ENCODE measurements at regions of chr4 and their contacts with region 1.

Region 1: DNA sequence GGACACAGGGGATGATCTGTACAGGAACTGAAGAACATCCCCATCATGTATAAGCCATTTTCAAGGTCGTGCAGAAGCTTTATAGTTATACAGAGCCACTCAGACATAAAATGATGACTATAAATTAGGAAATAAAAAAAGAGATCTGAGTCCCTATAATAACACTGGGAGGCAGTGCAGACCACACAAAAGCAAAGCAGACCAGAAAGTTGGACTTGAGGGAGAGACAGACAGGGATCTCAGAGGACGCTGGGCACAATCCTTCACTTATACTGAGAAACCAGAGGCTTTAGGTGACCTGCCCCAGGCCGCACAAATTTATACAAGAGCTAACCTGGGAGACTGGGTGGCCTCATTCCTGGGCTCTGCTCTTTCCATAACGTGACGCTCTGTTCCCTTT is 70.5 kb downstream of the HADH start:
- ATAC-seq: peak in 6 of 8 experiments; percentile 30 to 86 (median 70)
- H3K4me3 ChIP-seq: no peak overlapping the region
- H3K27ac ChIP-seq: no peak overlapping the region
- H3K4me1 ChIP-seq: no peaks in the 10 kb centered on the region

Region 2: DNA sequence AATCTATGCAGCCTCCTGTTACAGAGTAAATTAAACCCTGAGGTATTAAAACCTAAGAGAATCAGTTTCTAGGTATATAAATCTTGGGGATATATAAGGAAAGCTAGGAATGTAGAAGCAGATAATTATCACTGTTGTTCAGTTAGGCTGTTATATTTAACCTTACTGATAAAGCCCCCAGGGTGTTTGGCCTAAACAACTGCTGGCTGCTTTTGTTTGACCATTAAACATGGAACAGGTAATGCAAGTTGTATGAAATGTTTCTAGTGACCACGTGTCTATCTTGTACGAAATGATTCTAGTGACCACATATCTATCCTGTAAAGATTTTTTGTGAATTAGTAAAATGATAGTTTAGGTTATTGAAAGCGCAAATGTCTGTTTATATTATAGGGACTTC is 182.8 kb before region 1 on chr4:
- in situ Hi-C with region 1: no loop called
- ATAC-seq: no peak
- H3K4me3 ChIP-seq: no peak overlapping the region
- H3K27ac ChIP-seq: no peak overlapping the region
- H3K4me1 ChIP-seq: no peaks in the 10 kb centered on the region

Region 3: GRCh38 chr4:108172753-108173598 is 112.8 kb after region 1 on chr4:
- in situ Hi-C with region 1: loop called in 1 of 9 experiments (anchors 10 kb)
- ATAC-seq: peak; percentile 36 to 80 (median 76)
- H3K4me3 ChIP-seq: peak overlapping the region; percentile 32 to 43 (median 40)
- H3K27ac ChIP-seq: no peak overlapping the region
- H3K4me1 ChIP-seq: peaks cover 0 to 2% of the 10 kb centered on the region in 2 donors

Region 4: GRCh38 chr4:108492816-108493595 is 432.8 kb after region 1 on chr4:
- in situ Hi-C with region 1: loop called in 2 of 9 experiments (anchors 25 kb)
- ATAC-seq: peak in 3 of 8 experiments; percentile 87 to 100 (median 91)
- H3K4me3 ChIP-seq: no peak overlapping the region
- H3K27ac ChIP-seq: no peak overlapping the region
- H3K4me1 ChIP-seq: no peaks in the 10 kb centered on the region

Region 5: GRCh38 chr4:108560616-108561015 is 500.5 kb after region 1 on chr4:
- in situ Hi-C with region 1: loop called in 1 of 9 experiments (anchors 25 kb)
- ATAC-seq: peak in 2 of 8 experiments; percentile 56 to 66
- H3K4me3 ChIP-seq: no peak overlapping the region
- H3K27ac ChIP-seq: no peak overlapping the region
- H3K4me1 ChIP-seq: no peaks in the 10 kb centered on the region

Region 6: GRCh38 chr4:108596344-108596743 is 536.2 kb after region 1 on chr4:
- in situ Hi-C with region 1: loop called in 2 of 9 experiments (anchors 25 kb)
- ATAC-seq: no peak
- H3K4me3 ChIP-seq: no peak overlapping the region
- H3K27ac ChIP-seq: no peak overlapping the region
- H3K4me1 ChIP-seq: no peaks in the 10 kb centered on the region

Measured in motor neuron (in vitro differentiated cells).